Motor neuron (in vitro differentiated cells): ENCODE measurements at regions of chr17 and their contacts with region 1.

Region 1: GRCh38 chr17:43760254-43760852 is 1.8 kb upstream of the SOST start:
- ATAC-seq: peak; percentile 84 to 99 (median 94)
- H3K4me3 ChIP-seq: no peak overlapping the region
- H3K27ac ChIP-seq: no peak overlapping the region
- H3K4me1 ChIP-seq: peaks cover 24 to 35% of the 10 kb centered on the region in 2 donors

Region 2: DNA sequence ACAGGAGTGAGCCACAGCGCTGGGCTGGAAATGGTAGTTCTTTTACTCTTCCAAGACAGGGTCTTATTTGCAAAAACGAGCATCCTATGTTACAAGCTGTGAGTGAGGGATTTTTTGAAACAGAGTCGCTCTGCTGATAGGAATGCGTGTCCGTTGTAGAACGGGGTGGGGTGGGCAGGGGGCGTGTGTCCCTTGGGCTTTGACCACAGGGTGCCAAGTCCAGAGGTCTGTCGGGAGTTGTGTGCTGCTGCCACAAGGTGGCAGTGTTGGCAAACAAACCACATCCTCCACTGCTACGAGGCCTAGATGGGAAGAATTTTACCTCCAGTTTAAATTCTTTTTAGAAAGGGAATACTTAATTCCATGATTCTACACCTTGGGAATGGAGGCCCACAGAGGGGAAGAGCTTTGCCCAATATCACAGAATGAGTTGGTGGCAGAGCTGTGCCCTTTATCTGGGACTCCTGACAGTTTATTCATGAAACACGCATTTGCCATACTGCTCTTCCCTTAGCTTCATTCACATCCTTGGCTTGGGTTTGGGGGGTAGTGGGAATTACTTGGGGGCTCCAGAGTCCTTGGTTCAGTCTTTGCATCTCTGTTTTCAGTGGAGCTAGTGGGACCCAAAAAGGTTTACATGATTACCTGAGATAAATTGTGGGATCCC is 183.7 kb before region 1 on chr17:
- in situ Hi-C with region 1: loop called in 3 of 9 experiments (anchors 10 kb)
- ATAC-seq: peak; percentile 69 to 90 (median 78)
- H3K4me3 ChIP-seq: no peak overlapping the region
- H3K27ac ChIP-seq: no peak overlapping the region
- H3K4me1 ChIP-seq: peaks cover 39 to 40% of the 10 kb centered on the region in 2 donors

Region 3: DNA sequence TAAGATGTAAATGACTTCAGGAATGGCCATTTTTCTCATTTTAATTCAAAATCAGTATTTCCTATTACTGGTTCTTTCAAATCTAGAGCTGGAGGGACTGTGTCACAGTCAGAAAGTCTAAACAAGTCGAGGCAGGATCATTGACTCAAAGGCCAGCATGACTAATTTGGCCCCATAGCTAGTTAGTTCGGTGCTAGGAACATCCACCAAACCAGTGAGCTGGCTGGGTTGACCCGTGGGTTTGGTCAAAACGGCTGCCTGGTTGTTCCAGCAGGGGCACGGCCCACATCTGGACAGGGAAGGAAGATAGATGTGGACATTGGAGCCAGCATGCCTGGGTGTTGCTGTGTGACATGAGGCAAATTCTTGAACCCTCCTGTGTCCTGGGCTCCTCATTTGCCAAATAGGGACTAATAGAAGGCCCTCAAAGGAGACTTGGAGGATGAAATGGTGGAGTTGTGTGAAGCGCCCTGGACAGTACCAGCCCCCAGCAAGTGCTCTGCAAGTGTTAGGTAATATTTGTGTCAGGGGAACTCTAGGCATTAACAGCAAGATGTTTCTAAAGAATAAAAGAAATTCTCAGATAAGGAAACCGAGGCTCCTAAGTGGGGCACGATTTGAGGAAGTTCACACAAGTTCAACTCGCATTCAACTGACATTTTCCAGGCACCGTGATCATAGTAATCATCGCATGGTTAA is 144.9 kb before region 1 on chr17:
- in situ Hi-C with region 1: no loop called
- ATAC-seq: no peak
- H3K4me3 ChIP-seq: no peak overlapping the region
- H3K27ac ChIP-seq: no peak overlapping the region
- H3K4me1 ChIP-seq: peaks cover 0 to 7% of the 10 kb centered on the region in 2 donors

Region 4: GRCh38 chr17:43680461-43680860 is 79.9 kb before region 1 on chr17:
- in situ Hi-C with region 1: loop called in 1 of 9 experiments (anchors 10 kb)
- ATAC-seq: no peak
- H3K4me3 ChIP-seq: no peak overlapping the region
- H3K27ac ChIP-seq: no peak overlapping the region
- H3K4me1 ChIP-seq: peaks cover 59 to 75% of the 10 kb centered on the region in 2 donors

Region 5: DNA sequence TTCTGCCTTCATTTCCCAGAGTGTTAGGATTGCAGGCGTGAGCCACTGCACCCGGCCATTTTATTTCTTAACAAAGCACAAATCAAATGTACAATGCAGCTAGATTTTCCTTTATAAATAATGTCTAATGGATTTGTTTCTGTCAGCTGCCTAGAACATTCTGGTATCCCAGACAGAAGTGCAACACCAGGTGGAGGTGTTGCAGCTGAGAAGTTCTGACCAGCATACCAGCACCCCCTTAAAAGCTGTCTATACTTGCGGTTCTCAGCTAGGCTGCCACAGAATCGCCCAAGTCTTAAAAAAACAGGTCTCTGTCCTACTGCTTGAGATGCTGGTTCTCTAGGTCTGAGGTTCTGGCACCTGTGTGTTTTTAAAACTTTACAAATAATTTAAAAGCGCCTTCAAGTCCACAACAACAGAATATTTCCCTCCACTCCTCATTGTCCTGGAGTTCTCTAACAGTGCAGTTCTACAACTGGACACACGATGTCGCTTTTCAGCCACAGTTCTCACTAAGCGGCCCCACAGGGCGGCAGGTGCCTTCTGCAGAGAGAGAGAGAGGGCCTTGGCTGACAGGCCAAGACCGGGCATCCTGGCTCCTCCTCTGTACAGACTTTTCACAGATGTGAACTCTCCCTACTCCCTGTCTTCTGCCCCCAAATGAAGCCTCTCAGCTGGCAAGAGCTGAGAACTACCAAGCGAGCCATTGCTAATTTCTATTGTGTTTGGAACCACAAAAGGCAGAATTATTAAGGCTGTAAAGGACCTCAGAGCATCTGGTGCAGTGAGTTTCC is 66.1 kb before region 1 on chr17:
- in situ Hi-C with region 1: loop called in 6 of 9 experiments (anchors 10 kb)
- ATAC-seq: peak; percentile 90 to 99 (median 94)
- H3K4me3 ChIP-seq: no peak overlapping the region
- H3K27ac ChIP-seq: no peak overlapping the region
- H3K4me1 ChIP-seq: peaks cover 17 to 20% of the 10 kb centered on the region in 2 donors

Region 6: GRCh38 chr17:43701318-43701743 is 59.0 kb before region 1 on chr17:
- in situ Hi-C with region 1: loop called in 6 of 9 experiments (anchors 10 kb)
- ATAC-seq: no peak
- H3K4me3 ChIP-seq: no peak overlapping the region
- H3K27ac ChIP-seq: no peak overlapping the region
- H3K4me1 ChIP-seq: peaks cover 0 to 2% of the 10 kb centered on the region in 2 donors